Cardiac septum (tissue), 1 donor: ENCODE measurements at regions of chr4 and their contacts with region 1.

Region 1: DNA sequence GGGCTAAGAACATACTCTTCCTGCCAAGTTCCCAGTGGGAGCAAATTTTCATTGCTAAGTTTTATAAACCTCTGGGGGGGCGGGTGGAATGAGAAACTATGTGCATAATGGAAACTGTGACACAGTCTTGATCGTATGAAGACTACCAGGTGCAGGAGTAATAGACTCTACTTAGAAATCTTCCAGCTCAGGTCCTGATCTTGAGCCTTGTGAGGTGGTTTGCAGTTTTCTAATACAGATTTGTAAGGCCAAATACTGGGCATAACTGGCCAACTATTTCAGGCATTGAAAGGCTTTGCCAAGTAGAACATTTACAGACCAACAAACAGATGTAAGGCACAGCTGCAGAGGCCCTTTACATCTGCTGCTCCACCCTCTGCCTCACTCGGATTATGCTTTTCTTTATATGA is 89.7 kb upstream of the CBR4 start:
- DNase-seq: no peak

Region 2: DNA sequence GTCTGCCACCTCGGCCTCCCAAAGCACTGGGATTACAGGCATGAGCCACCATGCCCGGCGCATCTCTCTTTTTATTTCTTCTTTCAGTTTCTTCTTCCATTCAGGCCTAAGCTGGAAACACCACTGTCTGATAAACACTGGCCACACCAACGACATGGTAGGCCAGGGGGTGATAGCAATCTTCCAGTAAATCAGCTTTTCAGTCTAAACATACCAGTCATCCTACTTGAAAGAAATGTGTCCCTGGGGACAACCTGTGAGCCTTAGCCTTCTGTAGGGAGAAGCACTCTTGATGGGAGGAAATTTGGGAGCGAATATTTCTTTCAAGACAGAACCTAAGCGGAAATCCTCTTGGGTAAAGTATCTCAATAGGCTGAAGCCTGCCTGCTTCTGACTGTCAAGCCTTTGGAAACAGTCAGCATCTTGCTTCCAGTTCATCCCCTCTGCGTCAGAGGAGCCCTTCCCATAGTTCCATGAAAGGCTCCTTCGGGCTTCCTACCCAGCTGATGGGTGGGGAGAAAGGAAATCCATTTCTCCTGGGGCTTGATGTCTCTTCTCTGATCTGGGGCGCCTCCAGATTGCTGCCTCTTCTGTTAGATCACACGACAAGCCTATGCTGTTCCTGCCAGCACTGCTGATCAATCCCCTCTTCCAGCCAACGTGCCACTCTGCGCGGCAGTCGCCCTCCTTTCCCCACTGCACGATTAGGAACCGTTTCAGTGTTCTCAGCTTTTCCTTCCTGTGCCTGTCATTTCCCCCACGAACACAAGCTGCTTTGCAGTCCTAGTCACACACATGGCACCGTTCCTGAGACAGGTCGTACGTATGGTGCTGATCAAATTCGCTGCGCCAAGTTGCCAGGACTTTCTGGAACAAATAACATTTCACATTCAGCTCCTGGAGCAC is 40.2 kb before region 1 on chr4:
- intact Hi-C with region 1: loop called (anchors 5 kb)
- DNase-seq: peak; percentile 64

Region 3: DNA sequence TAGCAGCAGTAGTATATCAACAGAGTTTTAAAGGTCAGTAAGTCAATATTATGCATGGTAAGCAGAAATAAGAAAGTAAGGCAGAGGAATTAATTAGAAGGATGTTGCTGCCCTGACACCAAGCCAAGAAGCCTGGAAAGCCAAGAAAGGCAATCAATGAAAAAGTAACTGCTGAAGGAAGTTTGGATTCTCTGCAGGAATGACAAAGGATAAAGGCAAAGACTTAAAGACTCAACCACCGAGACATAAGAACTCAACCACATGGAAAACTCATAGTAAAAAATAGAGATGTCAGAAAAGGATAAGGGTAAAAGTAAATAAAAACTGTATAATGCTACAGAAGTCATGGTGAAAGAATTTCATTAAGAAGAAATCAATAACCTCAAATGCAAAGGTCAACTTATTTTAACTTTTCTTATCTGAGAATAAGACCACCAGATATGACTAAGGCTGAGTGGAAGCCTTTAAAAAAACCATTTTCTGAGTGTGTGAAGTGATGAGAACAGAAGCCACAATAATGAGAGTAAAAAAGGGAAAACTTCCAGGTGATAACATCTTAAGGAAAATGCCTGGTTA is 457.4 kb after region 1 on chr4:
- intact Hi-C with region 1: no loop called
- DNase-seq: no peak